ENCODE measurements at regions of chr11 and their contacts with region 1.

Region 1: DNA sequence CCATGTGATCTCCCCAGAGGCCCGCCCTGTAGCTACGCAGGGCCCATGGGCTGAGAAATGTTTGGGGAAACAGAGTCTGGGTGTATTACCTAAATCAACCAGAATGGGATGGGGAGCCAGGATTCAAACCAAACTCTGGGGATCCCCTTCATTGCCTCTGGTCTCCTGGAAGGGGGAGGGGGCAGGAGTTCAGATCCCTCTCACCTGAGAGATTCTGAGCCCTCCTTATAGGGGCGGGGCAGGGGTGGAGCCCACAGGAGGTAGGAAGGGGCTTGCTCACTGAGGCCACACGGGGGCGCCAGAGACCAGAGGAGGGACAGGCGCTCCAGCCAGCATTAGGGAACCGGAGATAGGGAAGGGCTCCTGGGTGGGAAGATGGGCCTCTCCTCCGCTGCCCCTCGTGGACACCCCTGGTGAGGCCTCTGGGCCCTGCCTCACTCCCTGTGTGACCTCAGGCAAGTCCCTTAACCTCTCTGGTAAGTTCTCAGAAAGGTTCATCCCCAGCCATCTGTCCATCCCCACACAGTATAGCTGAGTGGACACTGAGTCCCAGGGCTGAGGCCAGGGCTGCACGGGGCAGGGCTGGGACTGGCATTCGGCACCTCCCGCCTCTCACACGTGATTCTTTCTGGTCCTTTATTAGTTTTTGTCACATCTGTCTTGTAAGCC is 2.7 kb upstream of the CDC42BPG start:
- DNase-seq: peak; percentile 87 to 98 (median 92)
- ATAC-seq: peak; percentile 62
- H3K4me3 ChIP-seq: no peak overlapping the region
- H3K4me3 Mint-ChIP-seq: peak overlapping the region; percentile 76
- H3K27ac ChIP-seq: no peak overlapping the region
- H3K27ac Mint-ChIP-seq: peak overlapping the region; percentile 85
- H3K4me1 ChIP-seq: peaks cover 77% of the 10 kb centered on the region
- H3K4me1 Mint-ChIP-seq: peaks cover 64% of the 10 kb centered on the region
- H3K27me3 ChIP-seq: no peaks in the 10 kb centered on the region
- H3K27me3 Mint-ChIP-seq: no peaks in the 10 kb centered on the region
- CTCF ChIP-seq: peak; percentile 97

Region 2: GRCh38 chr11:64803163-64803845 is 43.8 kb before region 1 on chr11 and contains the start of gene MAP4K2:
- CTCF ChIA-PET with region 1: interaction called, 4 read pairs
- POLR2A ChIA-PET with region 1: interaction called, 10 read pairs
- intact Hi-C with region 1: loop called in 1 of 2 experiments (anchors 5 kb)
- DNase-seq: peak; percentile 67 to 97 (median 83)
- ATAC-seq: peak; percentile 86
- H3K4me3 ChIP-seq: peak within 1 kb of the TSS; percentile 85
- H3K4me3 Mint-ChIP-seq: peak within 1 kb of the TSS; percentile 91
- H3K27ac ChIP-seq: peak within 1 kb of the TSS; percentile 86 to 95
- H3K27ac Mint-ChIP-seq: peak within 1 kb of the TSS; percentile 91
- H3K4me1 ChIP-seq: peaks cover 41% of the 10 kb centered on the region
- H3K4me1 Mint-ChIP-seq: peaks cover 38% of the 10 kb centered on the region
- H3K27me3 ChIP-seq: no peaks in the 10 kb centered on the region
- H3K27me3 Mint-ChIP-seq: no peaks in the 10 kb centered on the region
- CTCF ChIP-seq: no peak
- total RNA-seq, gene MAP4K2: 71.9 to 74.1 TPM

Region 3: DNA sequence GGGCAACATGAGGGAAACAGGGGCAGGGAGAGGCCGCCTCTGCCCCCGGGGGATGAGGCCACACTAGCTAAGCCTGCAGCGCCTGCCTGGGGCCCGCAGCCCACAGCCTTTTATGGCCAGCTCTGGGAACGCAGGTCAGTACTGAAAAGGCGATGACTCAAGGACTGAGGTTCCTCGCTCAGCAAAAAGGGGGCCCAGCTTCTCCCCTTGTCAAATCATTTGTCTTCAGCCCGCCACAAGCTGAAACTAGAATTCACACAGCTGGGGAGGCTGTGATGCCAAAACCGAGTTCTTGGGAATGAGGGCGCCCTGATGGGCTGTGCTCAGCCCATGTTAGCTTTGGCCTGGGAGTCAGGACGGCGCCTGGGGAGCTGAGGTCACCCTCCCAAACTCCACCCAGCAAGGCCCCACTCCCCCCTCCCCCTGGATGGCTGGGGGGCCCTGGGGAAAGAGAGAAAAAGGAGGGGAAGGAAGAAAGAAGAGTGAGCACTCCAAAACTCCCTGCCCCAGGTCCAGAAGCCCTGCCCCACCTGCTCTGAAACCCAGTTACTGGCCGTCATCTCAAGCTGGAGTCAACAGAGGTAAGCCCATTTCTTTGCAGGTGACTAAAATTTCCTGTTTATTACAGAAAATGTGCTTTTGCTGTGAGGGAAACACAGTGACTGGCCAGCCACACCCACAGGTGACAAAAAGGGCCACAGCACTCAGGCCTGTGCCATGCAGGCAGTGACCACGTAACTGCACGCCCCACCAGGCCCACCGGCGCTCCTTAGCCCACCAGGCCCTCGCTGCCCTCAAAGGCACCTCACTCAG is 17.5 kb after region 1 on chr11:
- CTCF ChIA-PET with region 1: interaction called, 16 read pairs
- POLR2A ChIA-PET with region 1: interaction called, 293 read pairs
- intact Hi-C with region 1: loop called in 1 of 2 experiments (anchors 1 kb)
- DNase-seq: peak in 4 of 14 experiments; percentile 43 to 66 (median 55)
- ATAC-seq: no peak
- H3K4me3 ChIP-seq: peak overlapping the region; percentile 47
- H3K4me3 Mint-ChIP-seq: peak overlapping the region; percentile 71
- H3K27ac ChIP-seq: peak overlapping the region; percentile 82 to 89
- H3K27ac Mint-ChIP-seq: peak overlapping the region; percentile 93
- H3K4me1 ChIP-seq: peaks cover 100% of the 10 kb centered on the region
- H3K4me1 Mint-ChIP-seq: peaks cover 92% of the 10 kb centered on the region
- H3K27me3 ChIP-seq: no peaks in the 10 kb centered on the region
- H3K27me3 Mint-ChIP-seq: no peaks in the 10 kb centered on the region
- CTCF ChIP-seq: no peak

Region 4: DNA sequence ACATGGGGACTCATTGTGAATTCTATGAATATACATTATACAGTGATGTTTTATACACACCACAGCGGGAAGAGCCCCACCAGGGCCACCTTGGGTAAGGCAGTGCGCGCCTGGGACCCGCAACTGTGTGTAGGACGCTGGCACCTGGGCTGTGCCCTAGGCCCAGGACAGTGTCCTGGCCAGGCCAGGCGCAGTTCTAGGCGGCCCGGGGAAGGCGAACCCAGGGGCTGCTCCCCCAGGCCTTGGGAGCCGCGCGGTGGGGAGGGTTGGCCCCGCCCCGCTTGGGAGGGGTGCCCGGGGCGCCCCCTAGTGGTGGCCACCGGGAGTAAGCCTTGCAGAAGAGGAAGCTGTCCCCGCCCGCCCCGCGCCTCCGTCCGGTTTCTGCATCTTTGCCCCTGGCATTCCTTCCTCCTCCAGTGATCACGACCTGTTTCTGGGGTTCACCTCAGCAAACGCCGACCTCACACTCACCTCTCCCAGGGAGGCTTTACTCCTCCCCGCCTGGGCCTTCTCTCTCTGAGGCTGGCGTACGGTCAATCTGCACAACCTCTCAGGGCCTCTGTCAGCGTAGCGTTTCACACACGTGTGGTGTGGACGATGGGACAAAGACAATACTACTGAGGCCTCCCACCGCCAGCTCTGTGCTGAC is 40.7 kb after region 1 on chr11:
- CTCF ChIA-PET with region 1: interaction called, 136 read pairs
- POLR2A ChIA-PET with region 1: interaction called, 767 read pairs
- intact Hi-C with region 1: no loop called
- DNase-seq: peak; percentile 72 to 91 (median 84)
- ATAC-seq: peak; percentile 87
- H3K4me3 ChIP-seq: peak overlapping the region; percentile 4
- H3K4me3 Mint-ChIP-seq: peak overlapping the region; percentile 74
- H3K27ac ChIP-seq: peak overlapping the region in 1 of 2 donors; percentile 19
- H3K27ac Mint-ChIP-seq: peak overlapping the region; percentile 75
- H3K4me1 ChIP-seq: peaks cover 39% of the 10 kb centered on the region
- H3K4me1 Mint-ChIP-seq: peaks cover 26% of the 10 kb centered on the region
- H3K27me3 ChIP-seq: no peaks in the 10 kb centered on the region
- H3K27me3 Mint-ChIP-seq: no peaks in the 10 kb centered on the region
- CTCF ChIP-seq: peak; percentile 97

Region 5: GRCh38 chr11:65013692-65014145 is 166.6 kb after region 1 on chr11:
- CTCF ChIA-PET with region 1: interaction called, 5 read pairs
- POLR2A ChIA-PET with region 1: interaction called, 4 read pairs
- intact Hi-C with region 1: loop called in 1 of 2 experiments (anchors 1 kb)
- DNase-seq: peak; percentile 66 to 95 (median 82)
- ATAC-seq: peak; percentile 94
- H3K4me3 ChIP-seq: peak overlapping the region; percentile 87
- H3K4me3 Mint-ChIP-seq: peak overlapping the region; percentile 97
- H3K27ac ChIP-seq: peak overlapping the region; percentile 83 to 98
- H3K27ac Mint-ChIP-seq: peak overlapping the region; percentile 96
- H3K4me1 ChIP-seq: peaks cover 26% of the 10 kb centered on the region
- H3K4me1 Mint-ChIP-seq: peaks cover 26% of the 10 kb centered on the region
- H3K27me3 ChIP-seq: no peaks in the 10 kb centered on the region
- H3K27me3 Mint-ChIP-seq: no peaks in the 10 kb centered on the region
- CTCF ChIP-seq: peak; percentile 74